Activated CD8-positive, alpha-beta memory T cell treated with anti-CD3 and anti-CD28 coated beads, Interleukin-2, amount 10 ng/mL, durations not matched to agents 7 days and 5 days (primary cell): ENCODE measurements at regions of chr1 and their contacts with region 1.

Region 1: DNA sequence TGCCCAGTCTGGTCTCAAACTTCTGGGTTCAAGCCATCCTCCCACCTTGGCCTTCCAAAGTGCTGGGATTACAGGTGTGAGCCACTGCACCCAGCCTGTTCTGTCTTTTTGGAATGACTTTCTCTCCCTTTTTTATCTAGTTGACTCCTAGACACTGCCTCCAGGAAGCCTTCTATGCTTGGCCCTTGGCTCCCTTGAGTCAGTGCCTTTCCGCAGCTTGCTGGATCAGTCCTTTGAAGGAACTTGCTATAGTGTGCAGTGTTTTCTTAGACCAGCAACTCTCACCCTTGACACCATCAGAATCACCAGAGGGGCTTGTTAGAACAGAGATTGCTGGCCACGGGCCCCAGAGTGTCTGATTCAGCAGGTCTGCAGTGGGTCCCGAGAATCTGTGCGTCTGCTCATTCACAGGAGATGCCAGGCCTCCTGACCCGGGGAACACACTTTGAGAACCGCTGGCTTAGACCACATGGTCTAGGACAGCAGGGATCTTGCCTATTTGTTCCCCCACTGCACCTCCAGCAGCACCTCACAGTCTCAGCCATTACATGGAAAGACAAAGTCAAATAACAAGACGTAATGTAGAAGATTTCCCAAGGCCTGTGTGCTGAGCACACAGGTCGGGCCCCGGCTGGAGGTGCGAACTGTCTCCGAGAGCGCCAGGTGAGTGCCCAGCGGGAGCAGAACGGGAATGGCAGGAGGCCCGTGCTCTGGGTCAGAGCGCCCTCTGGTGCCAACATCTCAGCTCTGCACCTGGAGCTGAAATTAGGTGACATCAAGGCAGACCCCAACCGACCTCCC is 27.4 kb upstream of the CTPS1 start:
- DNase-seq: peak; percentile 68
- ATAC-seq: peak; percentile 81
- H3K4me3 Mint-ChIP-seq: no peak overlapping the region
- H3K27ac Mint-ChIP-seq: no peak overlapping the region
- H3K4me1 Mint-ChIP-seq: peaks cover 20% of the 10 kb centered on the region
- H3K27me3 Mint-ChIP-seq: peaks cover 21% of the 10 kb centered on the region

Region 2: GRCh38 chr1:40774266-40774998 is 177.7 kb before region 1 on chr1:
- CTCF ChIA-PET with region 1: interaction called, 96 read pairs
- DNase-seq: peak; percentile 75
- ATAC-seq: peak; percentile 79
- H3K4me3 Mint-ChIP-seq: no peak overlapping the region
- H3K27ac Mint-ChIP-seq: peak overlapping the region; percentile 29
- H3K4me1 Mint-ChIP-seq: peaks cover 24% of the 10 kb centered on the region
- H3K27me3 Mint-ChIP-seq: no peaks in the 10 kb centered on the region

Region 3: DNA sequence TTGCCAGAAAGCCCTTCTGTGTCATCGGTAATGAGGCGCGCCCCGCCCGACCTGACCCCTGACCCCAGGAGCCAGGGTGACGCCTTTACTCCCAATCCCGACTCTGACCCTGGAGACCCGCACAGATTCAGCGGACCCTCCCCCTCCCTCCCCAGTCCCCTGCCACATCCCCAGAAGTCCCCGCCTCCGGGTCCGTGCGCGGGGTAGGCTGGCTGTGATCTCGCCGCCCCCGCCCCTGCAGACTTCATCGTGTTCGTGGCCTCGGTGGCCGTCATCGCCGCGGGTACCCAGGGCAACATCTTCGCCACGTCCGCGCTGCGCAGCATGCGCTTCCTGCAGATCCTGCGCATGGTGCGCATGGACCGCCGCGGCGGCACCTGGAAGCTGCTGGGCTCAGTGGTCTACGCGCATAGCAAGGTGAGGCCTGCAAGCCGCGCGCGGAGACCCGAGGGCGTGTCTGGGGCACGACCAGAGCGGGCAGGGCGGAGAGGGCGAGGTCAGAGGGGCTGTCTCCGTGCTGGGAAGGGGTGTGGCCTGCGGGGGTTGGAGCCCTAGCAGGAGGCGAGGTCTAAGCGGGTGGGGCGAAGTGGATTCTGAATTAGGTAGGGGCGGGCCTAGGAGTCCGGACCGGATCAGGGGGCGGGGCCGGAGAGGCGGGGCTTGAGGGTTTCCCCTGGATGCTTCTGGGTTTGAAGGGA is 133.7 kb before region 1 on chr1:
- CTCF ChIA-PET with region 1: no interaction called
- DNase-seq: peak; percentile 93
- ATAC-seq: peak; percentile 98
- H3K4me3 Mint-ChIP-seq: peak overlapping the region; percentile 73
- H3K27ac Mint-ChIP-seq: peak overlapping the region; percentile 68
- H3K4me1 Mint-ChIP-seq: peaks cover 16% of the 10 kb centered on the region
- H3K27me3 Mint-ChIP-seq: peaks cover 18% of the 10 kb centered on the region

Region 4: GRCh38 chr1:40862008-40862863 is 89.9 kb before region 1 on chr1 and contains the start of gene CITED4:
- CTCF ChIA-PET with region 1: interaction called, 195 read pairs
- DNase-seq: peak; percentile 97
- ATAC-seq: peak; percentile 92
- H3K4me3 Mint-ChIP-seq: peak within 1 kb of the TSS; percentile 82
- H3K27ac Mint-ChIP-seq: peak within 1 kb of the TSS; percentile 97
- H3K4me1 Mint-ChIP-seq: peaks cover 22% of the 10 kb centered on the region
- H3K27me3 Mint-ChIP-seq: peaks cover 30% of the 10 kb centered on the region
- total RNA-seq, gene CITED4: 2.9 to 4.4 TPM

Region 5: DNA sequence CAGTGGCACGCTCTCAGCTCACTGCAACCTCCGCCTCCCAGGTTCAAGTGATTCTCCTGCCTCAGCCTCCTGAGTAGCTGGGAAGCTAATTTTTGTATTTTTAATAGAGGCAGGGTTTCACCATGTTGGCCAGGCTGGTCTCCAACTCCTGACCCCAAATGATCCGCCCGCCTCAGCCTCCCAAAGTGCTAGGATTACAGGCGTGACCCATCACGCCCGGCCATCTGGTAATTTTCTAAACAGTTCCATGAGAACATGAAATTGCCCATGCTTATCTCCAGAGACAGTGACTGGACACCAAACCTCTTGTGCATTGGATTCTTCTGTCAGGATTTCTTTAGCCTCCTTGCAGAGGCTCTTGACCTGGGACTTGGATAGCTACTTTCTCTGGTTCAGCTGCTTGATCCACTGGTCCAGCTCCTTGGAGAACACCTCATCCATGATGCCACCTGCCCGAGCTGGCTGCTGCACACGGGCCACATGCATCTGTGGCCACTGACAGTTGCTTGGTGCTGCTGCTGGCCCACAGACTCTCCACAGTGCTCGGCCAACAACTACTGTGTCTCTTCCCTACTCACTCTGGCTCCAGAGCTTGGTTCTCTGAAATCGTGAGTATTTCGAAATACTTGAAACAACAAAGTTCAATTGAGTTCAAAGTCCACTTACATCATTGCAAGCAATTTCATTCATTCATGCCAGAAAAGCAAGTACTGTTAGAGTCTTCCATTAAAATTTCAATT is 12.7 kb before region 1 on chr1:
- CTCF ChIA-PET with region 1: interaction called, 42 read pairs
- DNase-seq: no peak
- ATAC-seq: no peak
- H3K4me3 Mint-ChIP-seq: no peak overlapping the region
- H3K27ac Mint-ChIP-seq: no peak overlapping the region
- H3K4me1 Mint-ChIP-seq: no peaks in the 10 kb centered on the region
- H3K27me3 Mint-ChIP-seq: peaks cover 5% of the 10 kb centered on the region

Region 6: DNA sequence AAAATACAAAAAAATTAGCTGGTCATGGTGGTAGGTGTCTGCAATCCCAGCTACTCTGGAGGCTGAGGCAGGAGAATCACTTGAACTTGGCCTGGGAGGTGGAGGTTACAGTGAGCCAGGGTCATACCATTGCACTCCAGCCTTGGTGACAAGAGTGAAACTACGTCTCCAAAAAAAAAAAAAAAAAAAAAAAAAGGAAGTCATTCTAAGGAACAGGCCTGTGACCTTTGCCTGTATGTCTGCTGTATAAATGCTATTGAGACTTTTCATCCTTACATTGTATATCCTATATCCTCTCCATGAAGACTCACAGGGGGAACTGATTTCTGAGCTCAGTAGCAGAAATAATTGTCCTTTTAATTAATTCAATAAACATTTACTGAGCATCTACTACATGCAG is 19.8 kb after region 1 on chr1:
- CTCF ChIA-PET with region 1: interaction called, 88 read pairs
- DNase-seq: no peak
- ATAC-seq: no peak
- H3K4me3 Mint-ChIP-seq: no peak overlapping the region
- H3K27ac Mint-ChIP-seq: no peak overlapping the region
- H3K4me1 Mint-ChIP-seq: peaks cover 11% of the 10 kb centered on the region
- H3K27me3 Mint-ChIP-seq: peaks cover 2% of the 10 kb centered on the region